Panc1 (cell line): ENCODE measurements at regions of chr2 and their contacts with region 1.

Region 1: GRCh38 chr2:160286551-160286950 is 86.5 kb upstream of the ITGB6 start:
- DNase-seq: no peak
- ATAC-seq: no peak
- H3K4me3 ChIP-seq: no peak overlapping the region
- H3K27ac ChIP-seq: no peak overlapping the region
- H3K4me1 ChIP-seq: no peaks in the 10 kb centered on the region
- H3K27me3 ChIP-seq: no peaks in the 10 kb centered on the region
- CTCF ChIP-seq: no peak

Region 2: GRCh38 chr2:160306985-160307384 is 20.4 kb after region 1 on chr2:
- CTCF ChIA-PET with region 1: no interaction called
- POLR2A ChIA-PET with region 1: no interaction called
- in situ Hi-C with region 1: no loop called
- intact Hi-C with region 1: no loop called
- DNase-seq: no peak
- ATAC-seq: no peak
- H3K4me3 ChIP-seq: no peak overlapping the region
- H3K27ac ChIP-seq: no peak overlapping the region
- H3K4me1 ChIP-seq: no peaks in the 10 kb centered on the region
- H3K27me3 ChIP-seq: no peaks in the 10 kb centered on the region
- CTCF ChIP-seq: no peak

Region 3: GRCh38 chr2:160956243-160956802 is 669.8 kb after region 1 on chr2:
- CTCF ChIA-PET with region 1: no interaction called
- POLR2A ChIA-PET with region 1: interaction called, 11 read pairs
- in situ Hi-C with region 1: no loop called
- intact Hi-C with region 1: no loop called
- DNase-seq: no peak
- ATAC-seq: no peak
- H3K4me3 ChIP-seq: no peak overlapping the region
- H3K27ac ChIP-seq: no peak overlapping the region
- H3K4me1 ChIP-seq: no peaks in the 10 kb centered on the region
- H3K27me3 ChIP-seq: 0 out of 2 replicates have a peak, but pooled peaks cover 3% of the 10 kb centered on the region
- CTCF ChIP-seq: no peak